Mammary epithelial cell (primary cell): ENCODE measurements at regions of chr6 and their contacts with region 1.

Region 1: DNA sequence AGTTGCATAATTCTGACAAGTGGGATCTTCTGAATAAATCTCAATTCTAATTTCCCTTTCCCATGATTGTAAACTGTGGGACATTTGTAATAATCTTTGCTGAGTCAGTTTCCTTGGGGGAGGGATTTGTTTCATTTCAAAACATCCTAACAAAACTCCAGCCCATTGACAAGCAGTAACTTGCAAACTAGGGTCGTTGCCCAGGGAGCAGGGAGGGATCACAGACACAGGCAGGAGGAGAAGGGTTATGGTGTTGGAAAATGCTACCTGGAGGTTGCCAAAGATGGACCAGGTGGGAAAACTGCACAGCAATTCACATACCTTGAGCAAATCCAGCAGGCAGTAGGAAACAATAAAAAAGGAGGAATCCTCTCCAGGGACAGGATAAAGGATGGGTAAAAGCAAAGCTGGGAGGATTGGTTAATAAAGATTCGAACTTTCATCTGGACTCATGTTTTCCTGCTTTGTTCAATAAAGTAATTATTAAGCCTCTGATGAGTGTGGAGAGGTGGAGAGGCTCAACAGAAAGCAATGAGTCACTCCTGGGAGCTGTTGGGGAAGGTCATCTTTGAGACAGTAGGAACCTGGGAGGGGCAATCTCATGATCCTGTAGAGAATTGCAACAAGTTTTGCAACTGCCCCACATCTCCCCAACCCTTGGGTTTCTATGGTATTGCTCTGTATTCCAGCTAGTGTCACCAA is 87.3 kb upstream of the AKIRIN2 start:
- DNase-seq: peak; percentile 89
- H3K4me3 ChIP-seq: peak overlapping the region; percentile 18 to 28 (median 28)
- H3K27ac ChIP-seq: peak overlapping the region; percentile 98
- H3K4me1 ChIP-seq: peaks cover 18% of the 10 kb centered on the region
- H3K27me3 ChIP-seq: no peaks in the 10 kb centered on the region
- CTCF ChIP-seq: no peak

Region 2: GRCh38 chr6:87723170-87724078 is 65.9 kb before region 1 on chr6:
- CTCF ChIA-PET with region 1: no interaction called
- dilution Hi-C with region 1: no loop called
- in situ Hi-C with region 1: no loop called
- intact Hi-C with region 1: loop called (anchors 1 kb)
- DNase-seq: peak; percentile 98
- H3K4me3 ChIP-seq: no peak overlapping the region
- H3K27ac ChIP-seq: peak overlapping the region; percentile 88
- H3K4me1 ChIP-seq: peaks cover 33% of the 10 kb centered on the region
- H3K27me3 ChIP-seq: no peaks in the 10 kb centered on the region
- CTCF ChIP-seq: no peak

Region 3: DNA sequence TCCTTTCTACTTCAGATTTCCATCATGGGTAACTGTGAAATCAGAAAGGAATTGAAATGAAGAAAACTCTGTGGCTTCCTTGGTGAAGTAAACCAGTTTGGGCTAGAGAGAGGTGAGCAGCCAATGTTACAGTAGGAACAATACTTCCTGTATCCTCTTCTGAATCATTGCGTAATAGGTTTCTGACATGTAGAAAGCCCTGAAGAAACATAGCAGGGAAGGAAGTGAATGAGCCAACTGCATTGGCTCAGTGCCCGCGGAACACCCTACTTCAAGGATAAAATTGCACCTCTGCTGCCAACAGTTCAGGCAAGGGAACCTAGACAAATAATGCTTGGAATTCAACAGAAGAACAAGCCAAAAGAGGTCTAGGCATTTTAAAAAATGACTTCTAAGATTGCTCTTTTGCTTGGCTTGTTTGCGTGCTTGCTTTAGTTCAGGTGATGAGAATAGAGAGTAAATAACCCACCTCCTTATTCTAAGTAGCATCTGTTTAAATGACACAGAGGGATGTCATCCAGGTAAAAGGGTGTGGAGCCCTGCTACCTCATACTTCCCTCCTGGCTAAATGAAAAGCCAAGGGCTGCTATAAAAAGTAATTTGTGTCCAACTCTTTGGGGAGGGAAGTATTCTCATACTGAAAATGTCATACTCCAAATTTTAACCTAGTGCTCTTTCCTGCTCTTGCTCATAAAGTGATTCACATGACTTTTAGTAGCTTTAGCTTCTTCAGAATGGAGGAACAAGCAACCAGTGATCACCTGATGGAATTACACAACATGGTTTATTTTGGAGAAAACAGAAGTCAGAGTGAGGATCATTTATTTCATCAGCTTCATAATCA is 57.3 kb before region 1 on chr6:
- CTCF ChIA-PET with region 1: no interaction called
- dilution Hi-C with region 1: no loop called
- in situ Hi-C with region 1: no loop called
- intact Hi-C with region 1: loop called (anchors 1 kb)
- DNase-seq: peak; percentile 98
- H3K4me3 ChIP-seq: no peak overlapping the region
- H3K27ac ChIP-seq: peak overlapping the region; percentile 92
- H3K4me1 ChIP-seq: peaks cover 44% of the 10 kb centered on the region
- H3K27me3 ChIP-seq: no peaks in the 10 kb centered on the region
- CTCF ChIP-seq: no peak

Region 4: DNA sequence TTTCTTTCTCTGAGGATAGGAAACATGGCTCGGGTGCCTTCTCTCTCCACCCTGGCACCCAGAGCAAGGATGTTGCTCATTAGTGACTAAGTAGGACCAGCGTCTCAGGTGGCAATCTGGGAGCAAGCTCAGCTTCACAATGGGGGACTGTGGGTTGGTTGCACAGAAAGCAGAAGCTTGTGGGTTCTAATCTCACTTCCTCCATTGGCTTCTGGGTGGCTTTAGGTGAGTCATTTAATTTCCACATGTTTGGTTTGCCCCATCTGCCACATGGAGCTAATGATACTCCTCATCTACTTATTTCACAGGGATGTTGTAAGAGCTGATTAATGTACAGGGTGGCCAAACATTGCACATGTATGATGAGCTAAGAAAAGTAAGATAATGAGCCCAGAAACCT is 32.5 kb before region 1 on chr6:
- CTCF ChIA-PET with region 1: no interaction called
- dilution Hi-C with region 1: loop called (anchors 5 kb)
- in situ Hi-C with region 1: no loop called
- intact Hi-C with region 1: loop called (anchors 1 kb)
- DNase-seq: peak; percentile 93
- H3K4me3 ChIP-seq: no peak overlapping the region
- H3K27ac ChIP-seq: peak overlapping the region; percentile 42
- H3K4me1 ChIP-seq: peaks cover 21% of the 10 kb centered on the region
- H3K27me3 ChIP-seq: no peaks in the 10 kb centered on the region
- CTCF ChIP-seq: no peak